ENCODE measurements at regions of chr9 and their contacts with region 1.

Region 1: GRCh38 chr9:15873569-15874177 is 320.8 kb downstream of the CCDC171 start:
- DNase-seq: peak in 2 of 9 experiments; percentile 24 to 43
- ATAC-seq: no peak
- H3K4me3 ChIP-seq: no peak overlapping the region
- H3K4me3 Mint-ChIP-seq: no peak overlapping the region
- H3K27ac ChIP-seq: no peak overlapping the region
- H3K27ac Mint-ChIP-seq: no peak overlapping the region
- H3K4me1 ChIP-seq: no peaks in the 10 kb centered on the region
- H3K4me1 Mint-ChIP-seq: no peaks in the 10 kb centered on the region
- H3K27me3 ChIP-seq: no peaks in the 10 kb centered on the region
- H3K27me3 Mint-ChIP-seq: no peaks in the 10 kb centered on the region
- CTCF ChIP-seq: peak; percentile 86

Region 2: DNA sequence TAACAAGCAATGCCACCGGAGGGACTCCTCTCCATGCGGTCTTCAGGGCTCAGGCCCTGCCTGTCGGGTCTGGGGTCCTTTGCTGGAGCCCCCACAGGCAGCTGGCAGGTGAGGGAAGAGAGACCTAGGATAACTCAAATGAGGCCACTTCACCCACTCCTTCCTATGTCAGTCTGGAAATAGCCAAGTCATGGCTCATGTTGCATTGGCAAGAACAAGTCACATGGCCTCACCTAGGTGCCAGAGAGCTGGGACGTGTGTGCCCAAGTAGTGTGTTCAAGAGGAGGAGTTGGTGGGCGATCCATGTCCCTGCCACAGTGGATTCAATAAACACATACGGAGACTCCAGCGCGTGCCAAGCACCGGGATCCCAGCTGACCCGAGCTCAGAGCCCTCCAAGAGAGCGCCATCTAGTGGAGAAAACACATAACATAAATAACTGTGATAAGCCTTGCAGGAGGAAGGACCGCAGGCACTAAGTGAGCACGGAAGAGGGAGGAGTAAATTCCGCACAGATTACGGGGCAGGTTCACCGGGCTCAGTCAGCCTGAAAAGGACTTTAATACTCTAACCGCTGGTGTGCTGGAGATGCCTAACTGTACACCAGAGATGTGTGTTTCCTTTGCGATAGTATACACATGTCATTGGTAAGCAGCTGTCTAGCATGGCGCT is 260.0 kb after region 1 on chr9:
- CTCF ChIA-PET with region 1: no interaction called
- POLR2A ChIA-PET with region 1: no interaction called
- intact Hi-C with region 1: loop called in 1 of 2 experiments (anchors 5 kb)
- DNase-seq: peak in 2 of 9 experiments; percentile 20 to 47
- ATAC-seq: no peak
- H3K4me3 ChIP-seq: no peak overlapping the region
- H3K4me3 Mint-ChIP-seq: no peak overlapping the region
- H3K27ac ChIP-seq: no peak overlapping the region
- H3K27ac Mint-ChIP-seq: no peak overlapping the region
- H3K4me1 ChIP-seq: no peaks in the 10 kb centered on the region
- H3K4me1 Mint-ChIP-seq: peaks cover 2% of the 10 kb centered on the region
- H3K27me3 ChIP-seq: no peaks in the 10 kb centered on the region
- H3K27me3 Mint-ChIP-seq: peaks cover 6% of the 10 kb centered on the region
- CTCF ChIP-seq: peak; percentile 31

Region 3: DNA sequence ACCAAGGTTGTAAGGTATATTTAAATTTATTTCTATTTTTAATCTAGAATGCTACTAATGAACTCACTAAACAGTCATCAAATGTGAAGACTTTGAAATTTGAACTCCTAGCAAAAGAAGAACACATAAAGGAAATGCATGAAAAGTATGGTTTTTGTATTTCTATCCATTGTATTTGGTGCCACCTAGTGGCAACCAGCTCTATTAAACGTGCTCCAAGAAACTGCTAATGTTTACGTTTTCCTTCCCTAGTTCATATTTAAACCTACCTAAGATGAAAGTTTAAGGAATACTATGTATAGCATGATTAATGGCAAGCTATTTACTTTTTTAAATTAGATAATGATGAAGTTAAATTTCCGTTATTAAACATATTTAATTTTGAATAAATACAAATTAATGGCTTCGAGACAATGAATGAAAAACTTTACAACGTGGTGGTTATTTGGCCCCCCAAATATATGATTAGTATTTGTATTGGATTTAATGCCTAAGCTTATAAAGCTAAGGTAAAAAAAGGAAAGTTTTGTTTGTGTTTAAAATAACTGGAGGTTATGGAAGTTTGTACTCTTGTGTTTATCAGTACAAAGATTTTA is 1589.3 kb after region 1 on chr9:
- CTCF ChIA-PET with region 1: no interaction called
- POLR2A ChIA-PET with region 1: no interaction called
- intact Hi-C with region 1: loop called in 1 of 2 experiments (anchors 2 kb)
- DNase-seq: peak in 4 of 9 experiments; percentile 6 to 51 (median 17)
- ATAC-seq: no peak
- H3K4me3 ChIP-seq: no peak overlapping the region
- H3K4me3 Mint-ChIP-seq: no peak overlapping the region
- H3K27ac ChIP-seq: no peak overlapping the region
- H3K27ac Mint-ChIP-seq: no peak overlapping the region
- H3K4me1 ChIP-seq: no peaks in the 10 kb centered on the region
- H3K4me1 Mint-ChIP-seq: no peaks in the 10 kb centered on the region
- H3K27me3 ChIP-seq: no peaks in the 10 kb centered on the region
- H3K27me3 Mint-ChIP-seq: no peaks in the 10 kb centered on the region
- CTCF ChIP-seq: peak; percentile 71